ENCODE measurements at regions of chr2 and their contacts with region 1.

Region 1: GRCh38 chr2:45935791-45936622 is 284.5 kb downstream of the PRKCE start:
- DNase-seq: peak in 1 of 2 experiments; percentile 88
- H3K4me3 ChIP-seq: no peak overlapping the region
- H3K27ac ChIP-seq: no peak overlapping the region
- H3K4me1 ChIP-seq: peaks cover 0 to 2% (median 0%) of the 10 kb centered on the region in 4 experiments; a peak in 2 of 7 replicates
- H3K27me3 ChIP-seq: no peaks in the 10 kb centered on the region
- CTCF ChIP-seq: peak; percentile 63 to 86 (median 81)
- EP300 ChIP-seq: no peak
- POLR2A ChIP-seq: no peak
- RAD21 ChIP-seq: peak; percentile 93 to 94

Region 2: DNA sequence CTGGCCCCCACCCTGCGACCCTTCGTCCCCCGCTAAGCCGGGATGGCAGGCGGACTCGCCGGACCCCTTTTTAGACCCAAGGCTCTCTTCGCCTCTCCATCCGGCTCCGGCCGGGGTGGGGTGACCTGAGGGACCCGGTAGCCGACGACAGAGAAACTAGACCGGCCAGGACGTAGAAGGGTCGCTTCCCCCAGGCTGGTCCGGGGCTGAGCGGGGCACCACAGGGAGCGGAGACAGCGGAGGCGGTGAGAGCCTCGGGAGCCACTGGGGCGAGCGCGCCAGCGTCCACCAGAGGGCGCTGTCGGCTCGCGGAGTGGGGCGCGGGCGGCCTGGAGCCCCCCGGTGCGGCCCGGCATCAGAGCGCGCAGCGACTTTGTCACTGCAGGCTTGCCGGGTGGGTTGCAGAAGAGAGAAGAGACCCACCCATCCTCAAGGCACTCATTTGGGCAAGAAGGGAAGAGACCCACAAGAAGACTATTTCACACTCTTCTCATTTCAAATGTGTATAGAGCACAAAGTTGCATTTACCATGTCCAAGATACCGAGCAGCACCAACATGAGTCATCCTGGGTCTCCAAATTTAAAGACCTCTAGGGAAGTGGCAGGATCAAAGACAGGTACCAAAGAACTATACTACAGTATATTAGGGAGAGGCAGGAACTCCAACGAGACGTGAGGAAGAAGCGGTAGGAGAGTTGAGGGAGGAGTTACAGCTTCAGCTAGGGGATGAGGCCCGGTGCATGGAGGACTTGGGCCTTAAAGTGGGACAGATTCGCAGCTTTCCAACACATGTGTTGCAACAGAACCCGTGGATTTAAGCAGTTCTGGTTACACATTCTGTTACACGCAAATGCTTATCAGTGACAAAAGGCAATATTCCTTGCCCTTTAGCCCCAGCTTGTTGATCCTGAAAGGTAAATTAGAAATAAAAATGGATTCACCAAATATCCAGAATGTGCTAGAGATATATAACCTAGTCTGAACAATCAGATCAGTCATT is 292.2 kb before region 1 on chr2:
- CTCF ChIA-PET with region 1: interaction called, 12 read pairs
- POLR2A ChIA-PET with region 1: no interaction called
- DNase-seq: peak in 1 of 2 experiments; percentile 92
- H3K4me3 ChIP-seq: peak overlapping the region; percentile 6 to 59 (median 21); a peak in 7 of 8 replicates
- H3K27ac ChIP-seq: no peak overlapping the region
- H3K4me1 ChIP-seq: peaks cover 2 to 8% (median 3%) of the 10 kb centered on the region in 4 experiments; a peak in 4 of 7 replicates
- H3K27me3 ChIP-seq: peaks cover 3 to 35% (median 24%) of the 10 kb centered on the region in 4 experiments
- CTCF ChIP-seq: peak; percentile 79 to 93 (median 81)
- EP300 ChIP-seq: no peak
- POLR2A ChIP-seq: no peak
- RAD21 ChIP-seq: peak; percentile 94

Region 3: DNA sequence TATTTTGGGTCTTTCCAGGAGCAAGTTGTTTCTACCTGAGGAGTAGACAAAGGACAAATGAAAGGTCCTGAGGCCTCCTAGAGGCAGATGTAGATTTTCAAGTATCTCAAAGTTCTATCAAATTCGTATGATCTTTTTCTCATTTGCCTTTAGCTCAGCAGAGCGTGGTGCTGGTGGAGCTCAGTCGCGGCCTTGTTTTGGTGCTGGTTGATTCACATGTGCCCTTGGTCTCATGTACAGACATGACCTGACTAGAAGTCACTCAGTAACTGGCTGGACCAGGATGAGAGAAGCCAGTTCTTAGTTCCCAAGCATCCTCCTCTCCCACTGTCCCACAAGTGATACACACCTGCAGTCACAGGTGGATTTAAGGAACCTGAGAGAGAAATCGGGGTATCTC is 20.5 kb before region 1 on chr2:
- CTCF ChIA-PET with region 1: interaction called, 14 read pairs
- POLR2A ChIA-PET with region 1: no interaction called
- DNase-seq: no peak
- H3K4me3 ChIP-seq: no peak overlapping the region
- H3K27ac ChIP-seq: no peak overlapping the region
- H3K4me1 ChIP-seq: no peaks in the 10 kb centered on the region; a peak in 1 of 7 replicates
- H3K27me3 ChIP-seq: no peaks in the 10 kb centered on the region
- CTCF ChIP-seq: no peak
- EP300 ChIP-seq: no peak
- POLR2A ChIP-seq: no peak
- RAD21 ChIP-seq: no peak

Region 4: DNA sequence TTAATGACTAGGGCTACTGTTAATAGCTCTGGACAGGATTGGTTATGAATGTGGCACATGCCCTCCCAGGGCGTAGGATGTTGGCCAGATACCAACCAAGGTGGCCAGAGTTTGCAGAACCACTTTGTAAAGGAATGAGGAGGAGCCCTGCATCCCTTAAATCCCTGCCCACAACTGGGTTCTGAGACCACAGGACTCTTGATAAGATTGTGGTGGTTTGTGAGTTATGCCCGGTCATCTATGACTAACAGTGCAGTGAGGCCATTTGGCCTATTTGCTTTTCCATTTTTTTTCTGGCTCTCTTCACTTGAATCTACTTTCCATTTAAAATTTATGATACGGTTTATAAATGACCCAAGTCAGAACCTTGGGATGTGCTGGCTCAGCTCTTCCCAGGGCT is 10.0 kb after region 1 on chr2:
- CTCF ChIA-PET with region 1: no interaction called
- POLR2A ChIA-PET with region 1: no interaction called
- DNase-seq: no peak
- H3K4me3 ChIP-seq: no peak overlapping the region
- H3K27ac ChIP-seq: no peak overlapping the region
- H3K4me1 ChIP-seq: peaks cover 0 to 6% (median 0%) of the 10 kb centered on the region in 4 experiments; a peak in 1 of 7 replicates
- H3K27me3 ChIP-seq: no peaks in the 10 kb centered on the region
- CTCF ChIP-seq: no peak
- EP300 ChIP-seq: no peak
- POLR2A ChIP-seq: no peak
- RAD21 ChIP-seq: no peak

Measured in H1 (cell line).